Left cardiac atrium (tissue), 4 donors: ENCODE measurements at regions of chr11 and their contacts with region 1.

Region 1: GRCh38 chr11:8807544-8808225 is 103.3 kb upstream of the AKIP1 start:
- DNase-seq: peak; percentile 49
- ATAC-seq: peak; percentile 35 to 68

Region 2: GRCh38 chr11:8699903-8700302 is 107.8 kb before region 1 on chr11:
- intact Hi-C with region 1: loop called in 1 of 2 experiments (anchors 5 kb)
- DNase-seq: no peak
- ATAC-seq: peak in 1 of 2 donors; percentile 48

Region 3: DNA sequence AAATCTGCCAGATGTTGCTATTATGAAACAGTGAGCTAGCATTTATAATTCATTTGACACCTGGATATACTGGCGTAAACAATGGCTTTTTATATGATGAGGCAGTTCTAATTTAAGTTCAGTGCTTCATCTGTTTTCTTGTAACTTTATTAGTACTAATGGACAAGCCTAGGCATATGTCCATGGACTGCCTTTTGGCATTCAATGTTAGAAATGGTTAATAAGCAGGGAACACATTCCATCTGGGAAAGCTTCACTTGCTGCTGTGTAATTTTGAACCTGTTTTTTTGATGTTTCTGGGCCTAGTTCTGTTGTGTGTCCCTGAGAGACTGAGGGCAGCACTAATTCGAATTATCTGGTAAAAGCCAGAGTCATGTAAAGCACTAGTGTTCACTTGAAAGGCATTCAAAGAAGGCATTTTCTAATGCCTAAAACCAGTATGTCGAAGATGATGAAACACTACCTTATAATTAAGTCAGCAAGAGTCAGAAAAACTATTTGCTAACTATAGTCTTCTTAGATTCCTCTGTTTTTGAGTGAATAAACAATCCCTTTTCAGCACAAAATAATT is 994.7 kb after region 1 on chr11:
- intact Hi-C with region 1: no loop called
- DNase-seq: no peak
- ATAC-seq: peak; percentile 62